ENCODE measurements at regions of chr12 and their contacts with region 1.

Region 1: GRCh38 chr12:6367065-6367968 is 8.0 kb downstream of the SCNN1A start:
- DNase-seq: peak in 5 of 9 donors; percentile 27 to 57 (median 53)
- ATAC-seq: peak; percentile 70
- H3K4me3 ChIP-seq: no peak overlapping the region
- H3K4me3 Mint-ChIP-seq: peak overlapping the region in 2 of 10 donors; percentile 12 to 19
- H3K27ac ChIP-seq: no peak overlapping the region
- H3K27ac Mint-ChIP-seq: peak overlapping the region in 8 of 9 donors; percentile 14 to 91 (median 70)
- H3K4me1 ChIP-seq: peaks cover 0 to 4% of the 10 kb centered on the region in 2 donors
- H3K4me1 Mint-ChIP-seq: peaks cover 18 to 38% (median 35%) of the 10 kb centered on the region in 7 donors
- H3K27me3 ChIP-seq: no peaks in the 10 kb centered on the region
- H3K27me3 Mint-ChIP-seq: no peaks in the 10 kb centered on the region

Region 2: DNA sequence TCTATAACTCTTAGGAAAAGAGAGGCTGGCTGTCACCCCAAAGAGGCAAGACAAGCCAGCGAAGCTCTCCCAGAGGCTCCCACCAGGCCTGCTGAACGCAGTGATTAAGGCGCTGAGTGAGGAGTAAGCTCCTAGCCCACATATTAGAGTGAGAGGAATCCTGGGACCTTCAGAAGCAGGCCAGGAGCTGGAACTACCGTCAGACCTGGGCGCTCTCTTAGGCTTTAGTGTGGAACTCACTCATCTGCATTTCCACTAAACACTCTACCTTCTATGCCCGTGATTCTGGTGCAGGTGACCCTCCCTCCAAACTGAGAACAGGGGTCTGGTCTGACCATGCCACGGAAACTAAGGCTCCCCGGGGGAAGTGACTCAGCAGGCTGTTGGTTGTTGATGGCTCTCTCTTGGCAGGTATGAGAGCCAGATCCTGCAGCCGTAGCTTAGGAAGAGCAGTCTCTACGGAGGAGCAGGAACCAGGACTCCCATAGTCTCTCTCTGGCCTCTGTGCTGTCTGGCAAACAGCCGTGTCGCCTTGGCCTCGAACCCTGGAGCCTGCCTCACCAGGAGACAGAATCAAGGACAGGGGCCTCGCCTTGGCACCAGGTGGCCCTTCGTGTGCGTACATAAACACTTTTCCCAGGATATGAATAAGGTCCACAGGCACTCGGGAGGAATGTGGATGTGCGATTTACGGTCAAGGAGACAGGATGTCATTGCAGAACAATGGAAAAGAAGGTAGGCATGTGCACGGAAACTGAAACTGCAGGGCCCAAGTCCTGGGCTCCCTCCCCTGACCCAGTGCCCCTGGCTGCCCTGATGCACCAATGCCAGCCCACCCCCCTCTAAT is 250.9 kb before region 1 on chr12:
- CTCF ChIA-PET with region 1: no interaction called
- POLR2A ChIA-PET with region 1: no interaction called
- intact Hi-C with region 1: no loop called
- DNase-seq: no peak
- ATAC-seq: no peak
- H3K4me3 ChIP-seq: no peak overlapping the region
- H3K4me3 Mint-ChIP-seq: no peak overlapping the region
- H3K27ac ChIP-seq: no peak overlapping the region
- H3K27ac Mint-ChIP-seq: peak overlapping the region in 2 of 9 donors; percentile 14 to 17
- H3K4me1 ChIP-seq: no peaks in the 10 kb centered on the region
- H3K4me1 Mint-ChIP-seq: peaks cover 0 to 8% (median 0%) of the 10 kb centered on the region in 7 donors
- H3K27me3 ChIP-seq: no peaks in the 10 kb centered on the region
- H3K27me3 Mint-ChIP-seq: peaks cover 0 to 9% (median 0%) of the 10 kb centered on the region in 5 donors

Region 3: DNA sequence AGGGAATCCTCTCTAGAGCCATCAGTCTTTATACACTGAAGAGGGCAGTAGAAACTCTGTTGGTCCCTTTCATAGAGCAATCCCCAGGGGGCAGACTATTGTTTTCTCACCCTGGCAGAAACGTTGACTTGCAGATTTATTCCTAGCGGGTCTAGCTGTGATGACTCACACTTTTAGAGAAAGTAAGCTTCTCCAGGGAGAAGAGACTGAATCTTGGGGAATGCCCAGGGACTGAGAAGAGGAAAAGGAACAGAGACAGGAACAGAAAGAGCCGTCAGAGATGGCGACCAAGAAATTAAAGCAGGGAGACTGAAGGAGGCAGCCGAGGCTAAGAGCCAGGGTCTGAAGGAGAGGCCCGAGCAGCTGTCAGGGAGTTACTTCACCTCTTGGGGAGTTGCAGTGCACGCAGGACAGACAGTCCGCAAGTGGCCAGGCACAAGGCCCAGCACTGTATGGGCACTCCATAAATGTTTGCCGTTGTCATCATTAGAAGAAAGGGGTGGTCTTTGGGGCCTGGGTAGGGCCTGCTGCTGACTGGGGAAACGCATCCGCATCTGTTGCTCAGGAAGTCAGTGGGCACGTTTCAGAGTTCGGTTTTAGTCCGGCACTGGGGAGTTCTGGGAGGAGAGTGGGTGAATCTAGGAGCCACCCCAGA is 43.9 kb before region 1 on chr12:
- CTCF ChIA-PET with region 1: interaction called, 13 read pairs
- POLR2A ChIA-PET with region 1: interaction called, 9 read pairs
- intact Hi-C with region 1: loop called (anchors 1 kb)
- DNase-seq: peak in 5 of 9 donors; percentile 49 to 59 (median 52)
- ATAC-seq: peak; percentile 90
- H3K4me3 ChIP-seq: peak overlapping the region; percentile 45
- H3K4me3 Mint-ChIP-seq: peak overlapping the region; percentile 63 to 90 (median 82)
- H3K27ac ChIP-seq: peak overlapping the region; percentile 35
- H3K27ac Mint-ChIP-seq: peak overlapping the region; percentile 68 to 95 (median 89)
- H3K4me1 ChIP-seq: peaks cover 27 to 38% of the 10 kb centered on the region in 2 donors
- H3K4me1 Mint-ChIP-seq: peaks cover 37 to 74% (median 53%) of the 10 kb centered on the region in 7 donors
- H3K27me3 ChIP-seq: no peaks in the 10 kb centered on the region
- H3K27me3 Mint-ChIP-seq: peaks cover 0 to 6% (median 0%) of the 10 kb centered on the region in 5 donors

Region 4: DNA sequence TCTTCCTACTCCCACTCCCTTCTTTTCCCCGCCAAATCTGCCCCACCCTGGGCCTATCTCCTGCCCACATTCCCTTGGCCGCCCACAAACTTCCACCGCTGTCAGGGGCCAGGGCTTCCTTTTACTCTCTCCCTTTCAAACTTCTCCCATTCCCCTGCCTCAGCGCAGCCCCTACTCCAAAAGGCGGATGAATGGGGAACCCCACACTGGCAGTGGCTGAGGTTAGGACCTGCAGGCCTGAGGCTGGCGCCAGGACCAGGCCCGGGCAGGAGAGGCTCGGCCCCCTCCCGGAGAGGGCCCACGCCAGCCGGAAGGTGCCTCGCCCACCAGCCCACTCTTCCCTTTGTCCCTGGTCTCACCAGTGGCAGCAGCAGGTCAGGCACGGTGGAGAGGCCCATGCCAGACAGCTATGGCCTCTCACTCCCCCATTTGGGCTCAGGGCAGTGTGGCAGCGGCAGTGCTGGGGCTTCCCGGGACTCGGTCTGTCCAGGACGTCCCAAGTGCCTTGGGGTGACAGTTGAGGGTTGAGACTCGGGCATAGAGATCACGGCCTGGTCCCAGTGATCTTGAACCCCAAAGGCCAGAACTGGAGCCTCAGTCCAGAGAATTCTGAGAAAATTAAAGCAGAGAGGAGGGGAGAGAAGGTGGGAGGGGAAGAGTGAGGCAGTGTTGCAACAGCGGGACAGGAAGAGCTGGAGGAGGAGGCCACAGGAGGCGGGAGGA is 25.7 kb before region 1 on chr12 and contains the start of gene TNFRSF1A:
- CTCF ChIA-PET with region 1: interaction called, 139 read pairs
- POLR2A ChIA-PET with region 1: interaction called, 342 read pairs
- intact Hi-C with region 1: no loop called
- DNase-seq: peak in 7 of 9 donors; percentile 45 to 66 (median 54)
- ATAC-seq: peak; percentile 60
- H3K4me3 ChIP-seq: peak within 1 kb of the TSS; percentile 88
- H3K4me3 Mint-ChIP-seq: no peak within 1 kb of the TSS
- H3K27ac ChIP-seq: peak within 1 kb of the TSS; percentile 92
- H3K27ac Mint-ChIP-seq: peak within 1 kb of the TSS in 3 of 9 donors; percentile 95 to 97 (median 95)
- H3K4me1 ChIP-seq: peaks cover 54 to 56% of the 10 kb centered on the region in 2 donors
- H3K4me1 Mint-ChIP-seq: peaks cover 32 to 43% (median 39%) of the 10 kb centered on the region in 7 donors
- H3K27me3 ChIP-seq: no peaks in the 10 kb centered on the region
- H3K27me3 Mint-ChIP-seq: no peaks in the 10 kb centered on the region
- total RNA-seq, gene TNFRSF1A: 40.9 to 99.4 (median 67.3) TPM

Region 5: DNA sequence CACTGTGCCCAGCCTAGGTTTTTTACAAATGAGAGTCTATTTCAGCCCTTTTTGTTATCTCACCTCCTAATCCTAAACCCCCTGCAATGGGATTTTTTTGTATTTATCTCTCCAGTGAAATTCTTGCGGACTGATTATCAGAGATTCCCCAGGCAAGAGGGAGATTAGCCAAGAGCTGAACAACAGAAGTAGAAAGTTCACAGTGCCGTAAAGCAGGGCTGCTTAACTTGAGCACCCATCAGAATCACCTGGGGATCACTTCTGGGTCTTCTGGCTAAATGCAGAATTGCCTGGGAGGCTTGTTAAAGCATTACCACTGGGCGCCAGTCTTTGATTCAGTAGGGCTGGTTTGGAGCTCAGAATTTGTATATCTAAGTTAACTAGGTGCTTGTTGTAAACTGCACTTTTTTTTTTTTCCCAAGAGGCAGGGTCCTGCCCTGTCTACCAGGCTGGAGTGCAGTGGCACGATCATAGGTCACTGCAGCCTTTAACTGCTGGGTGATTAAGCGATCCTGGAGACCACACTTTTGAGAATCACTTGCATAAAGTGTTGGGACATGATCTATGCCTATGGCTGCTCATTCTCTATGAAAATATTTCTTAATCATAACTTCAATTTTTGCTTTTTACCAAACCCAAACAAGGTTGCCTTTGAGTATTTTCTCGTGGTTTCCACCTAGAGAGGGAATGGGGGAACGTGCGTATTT is 1342.8 kb after region 1 on chr12:
- CTCF ChIA-PET with region 1: no interaction called
- POLR2A ChIA-PET with region 1: no interaction called
- intact Hi-C with region 1: no loop called
- DNase-seq: no peak
- ATAC-seq: no peak
- H3K4me3 ChIP-seq: no peak overlapping the region
- H3K4me3 Mint-ChIP-seq: no peak overlapping the region
- H3K27ac ChIP-seq: no peak overlapping the region
- H3K27ac Mint-ChIP-seq: no peak overlapping the region
- H3K4me1 ChIP-seq: no peaks in the 10 kb centered on the region
- H3K4me1 Mint-ChIP-seq: no peaks in the 10 kb centered on the region
- H3K27me3 ChIP-seq: no peaks in the 10 kb centered on the region
- H3K27me3 Mint-ChIP-seq: peaks cover 0 to 9% (median 5%) of the 10 kb centered on the region in 5 donors